ENCODE measurements at regions of chr17 and their contacts with region 1.

Region 1: DNA sequence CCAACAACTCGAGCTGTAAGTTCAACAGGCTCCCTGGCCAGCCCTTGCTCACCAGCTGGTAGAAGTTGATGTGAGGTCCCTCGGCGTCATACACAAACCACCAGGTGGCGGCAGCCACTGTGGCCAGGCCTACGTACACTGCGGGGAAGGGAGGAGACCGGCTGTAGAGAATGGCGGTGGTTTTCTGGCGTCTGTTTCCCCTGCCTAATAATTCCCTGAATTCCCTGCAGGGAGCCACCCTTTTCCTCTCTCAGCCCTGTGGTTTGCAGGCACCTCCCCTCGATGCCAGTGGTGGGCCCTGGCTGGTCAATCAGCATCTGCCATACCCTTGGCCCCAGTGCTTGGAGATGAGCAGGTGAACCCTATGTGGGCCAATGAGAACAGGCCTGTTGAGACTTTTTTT is 18.9 kb upstream of the P2RX1 start:
- DNase-seq: peak; percentile 72
- ATAC-seq: peak; percentile 98
- H3K4me3 ChIP-seq: no peak overlapping the region
- H3K27ac ChIP-seq: no peak overlapping the region
- H3K4me1 ChIP-seq: 0 out of 2 replicates have a peak, but pooled peaks cover 1% of the 10 kb centered on the region
- H3K27me3 ChIP-seq: no peaks in the 10 kb centered on the region
- CTCF ChIP-seq: peak; percentile 71
- POLR2A ChIP-seq: no peak
- RAD21 ChIP-seq: peak; percentile 83

Region 2: DNA sequence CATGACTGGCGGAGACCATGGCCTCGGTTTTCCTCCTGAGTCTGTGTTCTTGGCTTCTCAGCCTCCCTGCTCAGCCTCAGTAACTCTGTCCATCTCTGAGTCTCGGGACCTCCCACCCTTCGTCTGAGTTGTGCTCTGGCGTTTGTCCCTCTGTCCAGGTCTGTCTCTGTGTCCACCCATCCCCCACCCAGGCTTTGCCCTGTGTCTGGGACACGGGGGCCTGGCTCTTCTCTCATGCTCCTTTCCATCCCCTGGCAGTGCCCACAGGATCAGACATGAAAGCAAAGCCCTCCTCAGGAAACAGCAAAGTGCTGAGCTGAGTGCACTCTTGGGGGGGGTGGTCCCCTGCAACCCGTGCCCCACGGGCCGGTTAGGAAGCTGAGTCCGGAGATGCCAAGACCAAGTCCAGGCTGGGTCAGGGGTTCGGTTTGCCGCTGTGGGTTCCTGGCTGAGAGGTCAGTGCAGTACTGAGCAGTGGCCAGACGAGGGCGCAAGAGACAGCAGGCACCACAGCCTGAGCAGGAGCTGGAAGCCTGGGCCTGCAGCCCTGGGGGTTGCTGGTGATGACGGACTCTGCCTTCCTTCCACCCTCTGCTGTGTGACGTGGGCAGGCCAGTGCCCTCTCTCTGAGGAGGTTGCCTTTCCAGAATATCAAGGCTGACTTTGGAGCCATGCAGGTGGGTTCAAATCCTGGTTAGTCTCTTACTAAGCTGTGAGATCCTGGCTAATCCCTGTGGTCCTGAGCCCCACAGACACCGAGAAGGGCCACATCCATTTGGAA is 21.4 kb before region 1 on chr17:
- CTCF ChIA-PET with region 1: interaction called, 11 read pairs
- POLR2A ChIA-PET with region 1: no interaction called
- dilution Hi-C with region 1: no loop called
- in situ Hi-C with region 1: no loop called
- intact Hi-C with region 1: no loop called
- DNase-seq: peak; percentile 76
- ATAC-seq: peak; percentile 100
- H3K4me3 ChIP-seq: no peak overlapping the region
- H3K27ac ChIP-seq: no peak overlapping the region
- H3K4me1 ChIP-seq: peaks cover 5% of the 10 kb centered on the region; the same call in 1 of the 2 replicates
- H3K27me3 ChIP-seq: no peaks in the 10 kb centered on the region
- CTCF ChIP-seq: peak; percentile 95
- POLR2A ChIP-seq: peak; percentile 53; the same call in 1 of the 2 replicates
- RAD21 ChIP-seq: peak; percentile 96

Region 3: GRCh38 chr17:4004517-4005295 is 69.6 kb after region 1 on chr17:
- CTCF ChIA-PET with region 1: interaction called, 8 read pairs
- POLR2A ChIA-PET with region 1: no interaction called
- dilution Hi-C with region 1: no loop called
- in situ Hi-C with region 1: no loop called
- intact Hi-C with region 1: loop called (anchors 1 kb)
- DNase-seq: no peak
- ATAC-seq: no peak
- H3K4me3 ChIP-seq: no peak overlapping the region
- H3K27ac ChIP-seq: no peak overlapping the region
- H3K4me1 ChIP-seq: peaks cover 23% of the 10 kb centered on the region
- H3K27me3 ChIP-seq: no peaks in the 10 kb centered on the region
- CTCF ChIP-seq: peak; percentile 63
- POLR2A ChIP-seq: no peak
- RAD21 ChIP-seq: peak; percentile 62

Region 4: GRCh38 chr17:4017377-4017776 is 82.2 kb after region 1 on chr17:
- CTCF ChIA-PET with region 1: no interaction called
- POLR2A ChIA-PET with region 1: no interaction called
- dilution Hi-C with region 1: no loop called
- in situ Hi-C with region 1: no loop called
- intact Hi-C with region 1: no loop called
- DNase-seq: no peak
- ATAC-seq: no peak
- H3K4me3 ChIP-seq: no peak overlapping the region
- H3K27ac ChIP-seq: no peak overlapping the region
- H3K4me1 ChIP-seq: no peaks in the 10 kb centered on the region
- H3K27me3 ChIP-seq: no peaks in the 10 kb centered on the region
- CTCF ChIP-seq: 0 out of 2 replicates have a peak, but pooled peaks have one; percentile 5
- POLR2A ChIP-seq: no peak
- RAD21 ChIP-seq: no peak

Region 5: GRCh38 chr17:4054446-4054845 is 119.3 kb after region 1 on chr17:
- CTCF ChIA-PET with region 1: no interaction called
- POLR2A ChIA-PET with region 1: no interaction called
- dilution Hi-C with region 1: no loop called
- in situ Hi-C with region 1: no loop called
- intact Hi-C with region 1: loop called (anchors 5 kb)
- DNase-seq: no peak
- ATAC-seq: no peak
- H3K4me3 ChIP-seq: no peak overlapping the region
- H3K27ac ChIP-seq: no peak overlapping the region
- H3K4me1 ChIP-seq: no peaks in the 10 kb centered on the region
- H3K27me3 ChIP-seq: no peaks in the 10 kb centered on the region
- CTCF ChIP-seq: no peak
- POLR2A ChIP-seq: no peak
- RAD21 ChIP-seq: no peak

Region 6: GRCh38 chr17:4074831-4075495 is 139.8 kb after region 1 on chr17:
- CTCF ChIA-PET with region 1: interaction called, 4 read pairs
- POLR2A ChIA-PET with region 1: no interaction called
- dilution Hi-C with region 1: no loop called
- in situ Hi-C with region 1: no loop called
- intact Hi-C with region 1: loop called (anchors 1 kb)
- DNase-seq: peak; percentile 47
- ATAC-seq: peak; percentile 63; the same call in 1 of the 2 replicates
- H3K4me3 ChIP-seq: no peak overlapping the region
- H3K27ac ChIP-seq: no peak overlapping the region
- H3K4me1 ChIP-seq: peaks cover 6% of the 10 kb centered on the region
- H3K27me3 ChIP-seq: no peaks in the 10 kb centered on the region
- CTCF ChIP-seq: peak; percentile 62
- POLR2A ChIP-seq: no peak
- RAD21 ChIP-seq: peak; percentile 60

Measured in IMR-90 (cell line).